ENCODE measurements at regions of chr11 and their contacts with region 1.

Region 1: GRCh38 chr11:73236854-73237253 is 18.8 kb downstream of the P2RY2 start:
- DNase-seq: peak; percentile 59

Region 2: DNA sequence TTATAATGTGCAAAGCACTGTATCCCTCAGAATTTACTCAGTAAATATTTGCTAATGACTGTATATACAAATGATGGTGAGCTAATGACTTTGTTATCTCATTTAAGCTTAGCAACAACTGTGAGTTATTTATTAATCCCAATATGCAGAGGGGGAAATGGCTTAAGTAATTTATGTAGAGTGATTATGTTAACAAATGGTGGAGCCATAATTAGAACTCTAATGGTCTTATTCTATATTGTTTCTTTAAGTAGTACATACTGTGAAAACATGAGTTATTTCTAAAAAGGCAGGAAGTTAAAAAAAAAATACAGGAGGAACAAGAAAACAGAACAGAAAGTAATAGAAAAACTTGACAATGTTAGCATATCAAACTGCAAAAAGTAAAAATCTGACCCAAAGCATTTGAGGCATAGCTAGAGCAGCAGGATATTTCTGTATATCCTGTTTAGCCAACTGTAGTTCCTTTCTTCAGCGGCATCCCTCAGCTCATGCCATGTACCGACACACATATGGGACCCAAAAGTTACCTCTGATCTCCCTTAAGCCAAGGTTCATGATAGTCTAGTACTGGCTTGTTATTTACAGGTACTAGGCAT is 189.0 kb before region 1 on chr11:
- CTCF ChIA-PET with region 1: interaction called, 14 read pairs
- POLR2A ChIA-PET with region 1: no interaction called
- DNase-seq: no peak

Region 3: DNA sequence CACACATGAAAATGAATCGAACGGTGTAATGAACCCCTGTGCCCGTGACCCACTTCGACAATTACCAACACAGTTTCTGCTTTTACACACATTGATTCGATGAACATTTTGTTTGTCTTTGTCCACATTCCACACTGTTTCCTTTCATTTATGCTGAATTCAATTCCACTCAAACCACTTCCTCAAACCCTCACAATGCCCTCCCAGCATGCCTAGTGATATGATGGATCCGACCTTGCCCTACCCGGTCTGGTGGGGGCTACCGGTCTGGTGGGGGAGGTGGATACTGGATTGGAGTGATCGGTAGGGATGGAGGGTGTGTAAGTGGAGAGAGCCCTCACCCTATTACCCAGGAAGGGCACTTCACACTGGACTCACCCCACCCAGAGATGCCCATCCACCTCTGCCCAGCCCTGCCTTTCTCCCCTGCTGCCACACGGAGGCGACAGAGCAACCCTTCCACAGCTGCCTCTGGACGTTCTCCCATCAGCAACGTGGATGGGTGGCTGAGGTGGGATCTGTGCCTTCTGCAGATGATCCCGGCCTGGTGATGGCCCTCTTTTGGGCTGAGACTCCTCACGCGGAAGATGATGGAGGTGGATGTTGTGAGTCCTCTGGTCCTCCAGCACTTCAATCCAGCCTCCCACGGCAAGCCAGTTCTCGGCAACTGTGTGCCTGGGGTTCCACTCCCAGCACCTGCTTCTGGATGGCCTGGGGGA is 51.7 kb before region 1 on chr11:
- CTCF ChIA-PET with region 1: interaction called, 14 read pairs
- POLR2A ChIA-PET with region 1: no interaction called
- DNase-seq: peak; percentile 80

Measured in HEK293T (cell line).